Left colon (tissue), 2 donors: ENCODE measurements at regions of chrX and their contacts with region 1.

Region 1: GRCh38 chrX:11143931-11144678 is 33.0 kb downstream of the HCCS start:
- DNase-seq: peak; percentile 45 to 56
- ATAC-seq: peak; percentile 87

Region 2: DNA sequence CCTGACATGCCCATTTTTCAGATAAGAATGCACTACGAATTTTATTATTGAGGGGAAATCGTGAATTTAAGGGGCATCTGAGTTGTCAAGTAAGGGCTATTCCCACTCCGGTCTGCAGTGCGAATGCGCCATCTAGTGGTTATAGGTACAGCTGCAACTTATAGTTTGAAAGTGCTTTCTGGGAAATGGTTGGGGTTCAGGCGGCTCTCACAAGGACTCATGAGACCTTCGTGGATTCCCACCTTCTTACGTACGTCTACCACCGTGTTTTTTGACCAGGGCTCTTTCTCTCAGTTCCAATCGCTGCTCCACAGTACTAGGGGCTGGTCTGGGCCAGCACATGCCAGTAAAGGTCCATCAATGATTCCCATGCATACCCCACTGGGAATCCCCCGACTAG is 626.2 kb after region 1 on chrX:
- intact Hi-C with region 1: loop called in 1 of 2 experiments (anchors 10 kb)
- DNase-seq: peak in 1 of 2 donors; percentile 27
- ATAC-seq: peak; percentile 80